Caco-2 (cell line): ENCODE measurements at regions of chr20 and their contacts with region 1.

Region 1: DNA sequence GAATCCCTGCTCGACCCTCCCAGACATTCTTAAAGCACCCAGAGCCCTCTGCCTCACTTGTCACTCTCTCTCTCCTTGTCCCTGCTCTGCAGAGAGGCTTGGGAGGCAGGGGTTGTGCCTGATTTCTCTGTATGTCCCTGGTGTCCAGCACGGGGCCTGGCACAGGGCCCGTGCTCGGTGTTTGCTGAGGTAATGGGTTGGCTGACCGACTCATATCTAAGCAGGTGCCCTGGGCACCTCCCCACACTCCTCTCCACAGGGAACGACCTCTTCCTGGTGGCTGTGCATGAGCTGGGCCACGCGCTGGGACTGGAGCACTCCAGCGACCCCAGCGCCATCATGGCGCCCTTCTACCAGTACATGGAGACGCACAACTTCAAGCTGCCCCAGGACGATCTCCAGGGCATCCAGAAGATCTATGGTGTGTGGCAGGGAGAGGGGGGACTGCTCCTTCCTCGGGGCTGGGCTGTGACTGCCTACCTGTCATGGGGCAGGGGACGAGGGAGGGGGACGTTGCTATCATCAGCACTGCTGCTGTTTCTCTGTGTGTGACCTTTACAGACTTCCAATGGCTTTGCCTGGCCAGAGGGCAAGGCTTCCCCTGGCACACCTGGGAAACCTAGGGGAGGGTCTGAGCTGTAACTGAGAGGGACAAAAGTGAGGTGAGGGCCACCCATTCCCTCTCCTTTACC is 14.2 kb downstream of the MMP24OS start:
- DNase-seq: peak in 1 of 2 experiments; percentile 57
- H3K4me3 ChIP-seq: peak overlapping the region; percentile 13
- H3K4me3 Mint-ChIP-seq: peak overlapping the region; percentile 63
- H3K27ac Mint-ChIP-seq: peak overlapping the region; percentile 98
- H3K4me1 ChIP-seq: peaks cover 65% of the 10 kb centered on the region
- H3K4me1 Mint-ChIP-seq: peaks cover 48% of the 10 kb centered on the region
- H3K27me3 ChIP-seq: no peaks in the 10 kb centered on the region
- H3K27me3 Mint-ChIP-seq: no peaks in the 10 kb centered on the region
- CTCF ChIP-seq: no peak

Region 2: DNA sequence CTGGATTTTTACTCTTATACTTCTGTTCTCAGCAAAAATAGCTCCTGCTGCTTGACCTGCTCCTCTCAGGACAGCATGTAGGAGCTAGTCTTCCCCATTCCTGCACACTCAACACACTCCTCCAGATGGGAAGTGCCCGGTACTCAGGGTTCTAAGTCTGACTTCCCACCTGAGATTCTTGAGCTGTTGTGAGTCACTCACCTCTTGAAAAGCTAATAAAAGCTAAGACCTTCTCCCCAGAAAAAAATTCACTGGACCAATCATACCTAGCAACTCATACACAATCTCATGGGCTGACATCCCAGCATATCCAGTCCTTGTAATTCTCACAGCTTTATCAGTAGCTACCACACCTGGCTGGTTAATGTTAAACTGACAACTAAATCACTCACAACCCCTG is 224.5 kb before region 1 on chr20:
- CTCF ChIA-PET with region 1: interaction called, 5 read pairs
- POLR2A ChIA-PET with region 1: interaction called, 4 read pairs
- intact Hi-C with region 1: loop called (anchors 2 kb)
- DNase-seq: peak; percentile 89 to 95
- H3K4me3 ChIP-seq: no peak overlapping the region
- H3K4me3 Mint-ChIP-seq: peak overlapping the region; percentile 33
- H3K27ac Mint-ChIP-seq: peak overlapping the region; percentile 38
- H3K4me1 ChIP-seq: peaks cover 43% of the 10 kb centered on the region
- H3K4me1 Mint-ChIP-seq: peaks cover 46% of the 10 kb centered on the region
- H3K27me3 ChIP-seq: no peaks in the 10 kb centered on the region
- H3K27me3 Mint-ChIP-seq: no peaks in the 10 kb centered on the region
- CTCF ChIP-seq: no peak

Region 3: GRCh38 chr20:35226775-35227681 is 36.6 kb before region 1 on chr20:
- CTCF ChIA-PET with region 1: interaction called, 37 read pairs
- POLR2A ChIA-PET with region 1: interaction called, 16 read pairs
- intact Hi-C with region 1: loop called (anchors 1 kb)
- DNase-seq: peak; percentile 86 to 96
- H3K4me3 ChIP-seq: peak overlapping the region; percentile 45
- H3K4me3 Mint-ChIP-seq: peak overlapping the region; percentile 70
- H3K27ac Mint-ChIP-seq: no peak overlapping the region
- H3K4me1 ChIP-seq: peaks cover 12% of the 10 kb centered on the region
- H3K4me1 Mint-ChIP-seq: no peaks in the 10 kb centered on the region
- H3K27me3 ChIP-seq: peaks cover 4% of the 10 kb centered on the region; the same call in 1 of the 2 replicates
- H3K27me3 Mint-ChIP-seq: peaks cover 15% of the 10 kb centered on the region
- CTCF ChIP-seq: no peak

Region 4: DNA sequence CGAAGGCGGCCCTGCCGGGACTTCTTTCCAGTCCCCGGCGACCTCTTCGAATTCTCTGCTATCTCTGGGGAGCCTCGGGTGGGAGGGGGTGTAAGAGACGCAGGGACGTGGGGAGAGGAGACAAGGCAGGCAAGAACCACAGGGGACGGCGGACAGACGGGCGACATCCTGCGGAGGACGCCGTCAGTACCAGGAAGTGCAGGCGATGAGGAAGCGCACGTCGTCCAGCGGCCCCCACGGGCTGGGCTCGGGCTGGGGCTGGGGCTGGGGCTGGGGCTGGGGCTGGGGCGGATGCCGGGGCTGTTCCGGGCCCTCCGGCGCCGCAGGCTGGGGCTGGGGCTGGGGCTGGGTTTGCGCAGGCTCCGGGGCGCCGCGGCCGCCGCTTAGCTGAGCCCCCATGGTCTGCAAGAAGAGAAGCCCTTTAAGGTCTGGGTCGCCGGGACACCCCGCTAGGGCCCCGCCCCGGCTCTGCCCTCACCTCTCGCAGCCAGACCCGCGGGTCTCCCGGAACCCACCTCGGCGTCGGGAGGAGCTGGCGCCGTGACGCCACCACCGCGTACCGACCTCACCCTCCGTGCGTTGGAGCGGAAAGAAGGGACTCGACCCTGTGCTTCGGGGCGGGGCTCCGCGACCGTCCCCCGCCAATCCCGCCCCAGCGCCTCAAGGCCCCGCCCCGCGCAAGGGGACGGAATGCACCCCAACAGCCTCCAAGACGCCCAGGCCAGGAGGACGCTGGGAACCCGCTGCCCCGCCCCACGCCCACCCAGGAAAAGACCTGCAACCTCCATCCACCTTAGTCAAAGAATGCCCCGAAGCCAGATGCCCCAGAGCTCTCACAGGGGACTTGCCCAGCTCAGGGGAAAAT is 14.1 kb after region 1 on chr20 and contains the start of gene MMP24OS:
- CTCF ChIA-PET with region 1: interaction called, 6 read pairs
- POLR2A ChIA-PET with region 1: interaction called, 21 read pairs
- intact Hi-C with region 1: no loop called
- DNase-seq: peak; percentile 91
- H3K4me3 ChIP-seq: peak within 1 kb of the TSS; percentile 58
- H3K4me3 Mint-ChIP-seq: peak within 1 kb of the TSS; percentile 72
- H3K27ac Mint-ChIP-seq: peak within 1 kb of the TSS; percentile 74
- H3K4me1 ChIP-seq: peaks cover 4% of the 10 kb centered on the region; the same call in 1 of the 2 replicates
- H3K4me1 Mint-ChIP-seq: no peaks in the 10 kb centered on the region
- H3K27me3 ChIP-seq: no peaks in the 10 kb centered on the region
- H3K27me3 Mint-ChIP-seq: no peaks in the 10 kb centered on the region
- CTCF ChIP-seq: peak; percentile 11 to 48
- total RNA-seq, gene MMP24OS: 38.8 and 42.3 TPM in 2 replicates

Region 5: DNA sequence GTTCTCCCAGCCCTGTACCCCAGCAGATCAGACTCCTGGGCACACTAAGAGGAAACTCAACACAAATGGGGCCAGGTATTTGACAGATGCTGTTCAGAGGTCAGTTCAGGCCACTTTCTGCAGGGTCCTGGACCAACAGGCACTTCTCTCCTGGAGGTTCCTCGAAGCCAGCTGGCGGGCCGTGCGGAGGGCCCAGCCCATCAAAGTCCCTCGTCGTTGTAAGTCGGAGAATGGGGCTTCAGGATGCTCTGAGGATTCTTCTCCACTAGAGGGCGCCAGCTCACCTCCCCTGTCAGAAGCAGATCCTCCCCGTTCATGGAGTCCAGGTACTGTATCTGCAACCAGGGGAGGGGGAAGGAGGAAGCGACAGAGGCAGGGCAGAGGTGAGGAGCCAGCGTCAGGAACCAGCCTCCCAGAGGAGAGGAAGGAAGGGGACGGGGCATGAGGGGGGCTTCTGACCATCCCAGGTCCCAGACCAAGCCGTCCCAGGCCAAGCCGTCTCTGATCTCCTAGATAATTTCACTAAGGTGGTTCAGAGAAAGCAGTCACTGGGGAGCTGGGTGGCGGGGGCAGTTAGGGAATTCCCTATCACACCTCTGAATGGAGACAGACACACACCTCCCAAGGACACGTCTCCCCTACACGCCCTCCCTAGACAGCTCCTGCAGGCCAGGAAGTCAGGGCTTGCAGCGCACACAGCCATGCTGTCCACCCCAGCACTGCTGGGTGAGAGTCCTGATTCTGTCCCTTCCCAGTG is 40.2 kb after region 1 on chr20:
- CTCF ChIA-PET with region 1: interaction called, 14 read pairs
- POLR2A ChIA-PET with region 1: interaction called, 12 read pairs
- intact Hi-C with region 1: no loop called
- DNase-seq: peak; percentile 97
- H3K4me3 ChIP-seq: no peak overlapping the region
- H3K4me3 Mint-ChIP-seq: peak overlapping the region; percentile 28
- H3K27ac Mint-ChIP-seq: peak overlapping the region; percentile 54
- H3K4me1 ChIP-seq: peaks cover 44% of the 10 kb centered on the region
- H3K4me1 Mint-ChIP-seq: peaks cover 41% of the 10 kb centered on the region
- H3K27me3 ChIP-seq: no peaks in the 10 kb centered on the region
- H3K27me3 Mint-ChIP-seq: no peaks in the 10 kb centered on the region
- CTCF ChIP-seq: peak; percentile 99 to 100

Region 6: DNA sequence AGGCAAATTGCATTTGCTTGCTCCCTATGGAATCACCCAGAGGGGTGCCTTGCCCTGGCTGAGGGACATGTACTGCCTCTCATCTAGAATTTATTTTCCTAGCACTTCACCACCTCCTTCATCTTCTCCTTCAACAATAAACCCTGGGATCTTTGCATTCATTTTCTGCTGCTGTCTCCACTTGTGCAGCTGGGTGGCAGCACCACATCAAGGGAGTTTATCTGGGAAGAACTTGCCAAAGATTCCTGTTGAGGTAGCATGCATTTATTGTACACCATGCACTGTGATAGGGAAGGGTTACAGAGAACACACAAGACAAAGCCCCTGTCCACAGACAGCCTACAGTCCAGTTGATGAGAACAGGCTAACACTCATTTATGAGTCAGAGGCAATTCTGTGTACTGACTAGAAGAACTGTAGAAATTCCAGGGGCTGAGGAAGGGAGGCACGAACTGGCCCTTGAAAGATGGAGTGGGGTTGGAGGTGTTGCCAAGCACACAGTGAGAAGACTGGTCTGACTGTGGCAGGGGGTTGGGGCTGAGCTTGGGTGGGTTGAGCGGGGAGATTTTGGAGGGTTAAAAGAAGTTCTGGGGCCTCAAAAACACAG is 248.2 kb after region 1 on chr20:
- CTCF ChIA-PET with region 1: no interaction called
- POLR2A ChIA-PET with region 1: no interaction called
- intact Hi-C with region 1: no loop called
- DNase-seq: peak in 1 of 2 experiments; percentile 68
- H3K4me3 ChIP-seq: no peak overlapping the region
- H3K4me3 Mint-ChIP-seq: no peak overlapping the region
- H3K27ac Mint-ChIP-seq: no peak overlapping the region
- H3K4me1 ChIP-seq: no peaks in the 10 kb centered on the region
- H3K4me1 Mint-ChIP-seq: no peaks in the 10 kb centered on the region
- H3K27me3 ChIP-seq: no peaks in the 10 kb centered on the region
- H3K27me3 Mint-ChIP-seq: no peaks in the 10 kb centered on the region
- CTCF ChIP-seq: peak; percentile 88 to 92